Caco-2 (cell line): ENCODE measurements at regions of chr2 and their contacts with region 1.

Region 1: DNA sequence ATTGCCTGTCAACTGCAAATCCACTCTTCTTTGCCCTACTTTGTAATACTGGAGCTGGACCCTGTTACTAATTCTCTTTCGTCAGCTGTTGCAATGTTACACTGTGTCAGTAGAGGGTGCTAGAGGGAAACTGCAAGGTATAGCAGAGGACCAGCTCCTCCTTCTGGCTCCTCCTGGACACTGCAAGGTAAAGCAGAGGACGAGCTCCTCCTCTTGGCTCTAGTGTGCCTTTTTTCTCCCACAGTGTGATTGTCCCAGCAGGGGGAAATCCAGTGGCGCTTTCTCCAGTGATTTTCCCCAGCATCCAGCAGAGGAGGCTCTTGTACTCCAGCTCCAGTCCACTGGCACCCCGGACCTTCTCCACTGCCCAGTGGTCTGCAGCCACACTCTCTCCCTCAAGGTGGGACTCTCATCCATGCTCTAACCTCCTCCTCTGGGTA is 95.6 kb downstream of the CAPN13 start:
- DNase-seq: peak; percentile 94
- H3K4me3 ChIP-seq: no peak overlapping the region
- H3K4me3 Mint-ChIP-seq: no peak overlapping the region
- H3K27ac Mint-ChIP-seq: no peak overlapping the region
- H3K4me1 ChIP-seq: no peaks in the 10 kb centered on the region
- H3K4me1 Mint-ChIP-seq: no peaks in the 10 kb centered on the region
- H3K27me3 ChIP-seq: no peaks in the 10 kb centered on the region
- H3K27me3 Mint-ChIP-seq: peaks cover 7% of the 10 kb centered on the region
- CTCF ChIP-seq: peak; percentile 100

Region 2: GRCh38 chr2:30165050-30165520 is 546.6 kb before region 1 on chr2:
- CTCF ChIA-PET with region 1: interaction called, 209 read pairs
- POLR2A ChIA-PET with region 1: interaction called, 5 read pairs
- intact Hi-C with region 1: loop called (anchors 1 kb)
- DNase-seq: peak; percentile 86 to 87
- H3K4me3 ChIP-seq: no peak overlapping the region
- H3K4me3 Mint-ChIP-seq: no peak overlapping the region
- H3K27ac Mint-ChIP-seq: no peak overlapping the region
- H3K4me1 ChIP-seq: peaks cover 3% of the 10 kb centered on the region; the same call in 1 of the 2 replicates
- H3K4me1 Mint-ChIP-seq: peaks cover 9% of the 10 kb centered on the region
- H3K27me3 ChIP-seq: no peaks in the 10 kb centered on the region
- H3K27me3 Mint-ChIP-seq: no peaks in the 10 kb centered on the region
- CTCF ChIP-seq: peak; percentile 84 to 86

Region 3: DNA sequence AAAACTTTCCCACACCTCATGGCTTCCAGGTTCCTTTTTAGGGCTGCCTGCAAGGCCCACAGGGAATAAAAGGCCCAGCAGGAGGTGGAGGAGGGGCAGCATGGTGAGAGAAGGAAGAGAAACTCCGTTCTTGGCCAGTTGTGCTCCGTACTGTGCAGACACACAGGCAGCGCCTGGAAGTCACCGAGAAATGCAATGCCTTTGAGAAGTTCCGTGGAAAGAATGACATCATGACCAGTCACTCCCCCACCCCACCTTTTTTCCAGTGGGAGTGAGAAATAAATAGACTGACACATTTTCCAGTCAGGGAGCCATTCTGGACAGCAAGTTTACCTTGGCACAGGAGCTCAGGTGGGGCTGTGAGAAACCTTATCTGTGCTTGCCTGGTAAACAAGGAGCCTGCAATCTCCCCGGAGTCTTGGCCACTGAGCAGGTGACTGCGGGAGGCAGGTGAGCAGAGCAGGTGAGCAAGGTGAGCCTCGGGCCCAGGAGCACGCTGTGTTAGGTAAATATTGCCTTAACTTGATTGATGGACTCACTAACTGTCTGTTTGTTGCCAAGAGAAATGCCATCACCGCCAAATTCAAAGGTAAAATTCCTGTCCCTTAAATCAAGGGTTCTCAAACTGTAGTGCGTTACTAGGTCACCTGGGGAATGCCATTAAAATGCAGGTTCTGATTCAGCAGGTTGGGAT is 493.9 kb before region 1 on chr2:
- CTCF ChIA-PET with region 1: interaction called, 10 read pairs
- POLR2A ChIA-PET with region 1: no interaction called
- intact Hi-C with region 1: no loop called
- DNase-seq: peak; percentile 95 to 97
- H3K4me3 ChIP-seq: peak overlapping the region; percentile 17
- H3K4me3 Mint-ChIP-seq: peak overlapping the region; percentile 69
- H3K27ac Mint-ChIP-seq: peak overlapping the region; percentile 97
- H3K4me1 ChIP-seq: peaks cover 48% of the 10 kb centered on the region
- H3K4me1 Mint-ChIP-seq: peaks cover 63% of the 10 kb centered on the region
- H3K27me3 ChIP-seq: no peaks in the 10 kb centered on the region
- H3K27me3 Mint-ChIP-seq: no peaks in the 10 kb centered on the region
- CTCF ChIP-seq: no peak

Region 4: GRCh38 chr2:30545875-30546274 is 165.8 kb before region 1 on chr2:
- CTCF ChIA-PET with region 1: interaction called, 11 read pairs
- POLR2A ChIA-PET with region 1: no interaction called
- intact Hi-C with region 1: no loop called
- DNase-seq: no peak
- H3K4me3 ChIP-seq: no peak overlapping the region
- H3K4me3 Mint-ChIP-seq: no peak overlapping the region
- H3K27ac Mint-ChIP-seq: no peak overlapping the region
- H3K4me1 ChIP-seq: peaks cover 44% of the 10 kb centered on the region
- H3K4me1 Mint-ChIP-seq: peaks cover 51% of the 10 kb centered on the region
- H3K27me3 ChIP-seq: no peaks in the 10 kb centered on the region
- H3K27me3 Mint-ChIP-seq: no peaks in the 10 kb centered on the region
- CTCF ChIP-seq: no peak

Region 5: GRCh38 chr2:30680121-30680520 is 31.5 kb before region 1 on chr2:
- CTCF ChIA-PET with region 1: no interaction called
- POLR2A ChIA-PET with region 1: no interaction called
- intact Hi-C with region 1: no loop called
- DNase-seq: no peak
- H3K4me3 ChIP-seq: no peak overlapping the region
- H3K4me3 Mint-ChIP-seq: no peak overlapping the region
- H3K27ac Mint-ChIP-seq: no peak overlapping the region
- H3K4me1 ChIP-seq: no peaks in the 10 kb centered on the region
- H3K4me1 Mint-ChIP-seq: peaks cover 4% of the 10 kb centered on the region
- H3K27me3 ChIP-seq: no peaks in the 10 kb centered on the region
- H3K27me3 Mint-ChIP-seq: no peaks in the 10 kb centered on the region
- CTCF ChIP-seq: no peak

Region 6: DNA sequence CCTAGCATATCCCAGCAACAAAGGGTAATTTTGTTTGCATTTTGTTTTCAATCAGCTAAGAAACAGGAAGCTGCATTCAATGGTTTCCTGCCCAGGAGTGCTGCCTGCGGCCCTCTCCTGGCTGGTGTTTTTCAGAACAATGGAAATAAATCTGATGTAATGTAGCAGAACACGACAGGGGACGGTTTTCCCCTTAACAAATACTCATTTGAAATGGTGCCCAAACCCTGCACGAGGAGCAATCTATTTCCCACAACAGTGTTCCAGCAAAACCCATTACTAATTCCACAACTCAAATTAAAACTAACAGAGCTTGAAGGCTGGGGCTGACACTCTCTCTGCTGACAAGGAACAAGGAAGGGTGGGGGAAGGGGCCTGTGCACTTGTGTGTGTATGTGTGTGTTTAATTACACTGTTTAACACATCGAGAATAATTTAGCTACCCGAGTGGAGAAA is 86.9 kb after region 1 on chr2:
- CTCF ChIA-PET with region 1: interaction called, 10 read pairs
- POLR2A ChIA-PET with region 1: no interaction called
- intact Hi-C with region 1: no loop called
- DNase-seq: no peak
- H3K4me3 ChIP-seq: no peak overlapping the region
- H3K4me3 Mint-ChIP-seq: no peak overlapping the region
- H3K27ac Mint-ChIP-seq: no peak overlapping the region
- H3K4me1 ChIP-seq: no peaks in the 10 kb centered on the region
- H3K4me1 Mint-ChIP-seq: peaks cover 10% of the 10 kb centered on the region
- H3K27me3 ChIP-seq: no peaks in the 10 kb centered on the region
- H3K27me3 Mint-ChIP-seq: no peaks in the 10 kb centered on the region
- CTCF ChIP-seq: no peak

Region 7: GRCh38 chr2:30915486-30915885 is 203.8 kb after region 1 on chr2:
- CTCF ChIA-PET with region 1: interaction called, 3 read pairs
- POLR2A ChIA-PET with region 1: no interaction called
- intact Hi-C with region 1: loop called (anchors 1 kb)
- DNase-seq: peak; percentile 55 to 69
- H3K4me3 ChIP-seq: no peak overlapping the region
- H3K4me3 Mint-ChIP-seq: no peak overlapping the region
- H3K27ac Mint-ChIP-seq: no peak overlapping the region
- H3K4me1 ChIP-seq: no peaks in the 10 kb centered on the region
- H3K4me1 Mint-ChIP-seq: no peaks in the 10 kb centered on the region
- H3K27me3 ChIP-seq: no peaks in the 10 kb centered on the region
- H3K27me3 Mint-ChIP-seq: peaks cover 10% of the 10 kb centered on the region
- CTCF ChIP-seq: peak; percentile 44 to 81

Region 8: DNA sequence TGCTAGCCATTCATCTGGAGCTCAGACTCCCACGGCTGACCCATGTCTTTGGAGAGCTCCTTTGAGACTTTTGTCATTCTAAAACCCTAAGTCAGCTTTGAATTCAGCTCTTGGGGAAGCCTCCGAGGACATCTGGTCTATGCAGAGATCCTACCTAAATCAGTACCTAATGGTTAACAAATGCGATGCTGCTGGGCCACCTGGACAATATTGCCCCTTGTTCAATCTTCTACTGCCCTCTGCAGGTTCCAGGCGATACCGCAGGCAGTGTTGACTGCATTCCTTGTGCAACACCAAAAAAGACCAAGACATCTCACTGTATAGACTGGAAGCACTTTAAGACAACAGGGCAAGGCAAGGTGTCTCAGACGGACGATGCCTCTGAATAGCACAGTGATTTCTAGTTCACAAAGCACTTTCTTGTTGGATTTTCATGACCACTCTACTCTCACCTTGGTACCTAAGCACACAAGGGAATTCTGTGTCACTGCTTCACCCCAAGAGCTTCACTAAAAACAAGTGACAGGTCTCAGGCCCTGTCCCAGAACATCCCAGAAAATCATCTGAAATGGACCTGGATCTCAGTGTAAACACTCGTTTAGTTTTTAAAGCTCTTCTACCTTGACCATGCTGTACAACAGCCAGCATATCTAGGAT is 622.0 kb after region 1 on chr2:
- CTCF ChIA-PET with region 1: interaction called, 7 read pairs
- POLR2A ChIA-PET with region 1: interaction called, 3 read pairs
- intact Hi-C with region 1: loop called (anchors 1 kb)
- DNase-seq: peak; percentile 82 to 86
- H3K4me3 ChIP-seq: no peak overlapping the region
- H3K4me3 Mint-ChIP-seq: no peak overlapping the region
- H3K27ac Mint-ChIP-seq: no peak overlapping the region
- H3K4me1 ChIP-seq: no peaks in the 10 kb centered on the region
- H3K4me1 Mint-ChIP-seq: no peaks in the 10 kb centered on the region
- H3K27me3 ChIP-seq: no peaks in the 10 kb centered on the region; the same call in 1 of the 2 replicates
- H3K27me3 Mint-ChIP-seq: no peaks in the 10 kb centered on the region
- CTCF ChIP-seq: peak; percentile 91 to 98